K562 (cell line): ENCODE measurements at regions of chr3 and their contacts with region 1.

Region 1: DNA sequence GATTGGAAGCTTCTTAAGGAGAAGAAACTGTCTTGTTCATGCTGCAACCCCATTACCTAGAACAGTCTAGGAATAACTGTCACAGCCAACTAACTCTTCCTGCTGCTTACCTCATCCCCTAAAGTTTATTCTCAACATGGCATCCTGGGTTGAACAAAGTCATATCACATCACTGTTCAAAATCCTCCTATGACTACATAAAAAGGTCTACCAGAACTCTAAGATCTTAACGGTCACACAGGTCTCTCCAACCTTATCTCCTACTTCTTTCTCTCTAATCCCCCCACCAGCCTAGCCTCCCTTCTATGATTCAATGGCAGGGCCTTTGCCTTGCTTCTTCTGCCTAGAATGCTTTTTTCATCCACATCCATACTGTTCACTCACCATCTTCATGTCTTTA is 69.3 kb downstream of the CLASP2 start:
- DNase-seq: peak in 2 of 4 experiments; percentile 20 to 32
- ATAC-seq: peak; percentile 59
- H3K4me3 ChIP-seq: no peak overlapping the region
- H3K27ac ChIP-seq: peak overlapping the region; percentile 35; the same call in 1 of the 3 replicates
- H3K4me1 ChIP-seq: peaks cover 0 to 16% of the 10 kb centered on the region in 2 experiments; a peak in 2 of 5 replicates
- H3K27me3 ChIP-seq: no peaks in the 10 kb centered on the region
- CTCF ChIP-seq: no peak
- EP300 ChIP-seq: no peak
- POLR2A ChIP-seq: no peak
- RAD21 ChIP-seq: no peak

Region 2: DNA sequence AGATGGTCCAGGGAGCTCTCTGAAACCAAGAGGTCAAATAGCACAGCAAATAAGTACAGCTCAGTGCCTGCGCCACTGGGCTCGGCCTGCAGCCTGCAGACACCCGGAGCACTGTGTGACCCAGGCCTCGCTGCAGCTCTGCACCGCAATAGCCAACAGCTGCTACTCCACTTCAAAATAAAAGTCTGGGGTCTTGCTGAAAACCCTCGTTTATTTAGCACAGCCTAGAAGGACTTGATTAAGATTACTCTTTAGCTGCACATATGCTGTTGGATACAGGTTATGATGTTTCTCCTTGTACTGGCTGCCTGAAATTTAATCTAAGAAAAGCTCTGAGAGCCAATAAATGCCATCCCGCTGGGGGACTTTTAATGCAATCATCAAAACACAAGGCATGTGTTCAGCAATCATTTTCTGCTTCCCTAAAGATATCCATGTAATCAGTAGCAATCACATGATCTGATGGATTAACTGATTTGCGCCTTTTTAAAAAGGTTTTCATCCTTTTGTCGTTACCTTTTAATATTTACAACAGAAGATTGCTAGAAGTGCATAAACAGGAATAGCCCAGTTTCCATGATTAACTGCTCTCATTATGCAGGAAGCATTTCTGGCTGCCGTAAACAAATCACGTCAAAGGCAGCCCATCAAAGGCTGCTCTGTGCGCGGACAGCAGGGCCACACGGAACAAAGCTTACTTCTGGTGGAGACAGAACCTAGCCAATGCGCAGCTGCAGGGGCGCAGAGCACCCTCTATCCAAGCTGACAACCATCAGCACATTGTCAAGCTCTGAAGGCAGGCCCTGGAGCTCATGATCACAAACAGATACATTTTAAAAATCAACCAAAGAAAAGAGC is 10.4 kb after region 1 on chr3:
- CTCF ChIA-PET with region 1: no interaction called
- POLR2A ChIA-PET with region 1: interaction called, 12 read pairs
- in situ Hi-C with region 1: no loop called
- intact Hi-C with region 1: no loop called
- DNase-seq: peak; percentile 63 to 71 (median 66)
- ATAC-seq: peak; percentile 97
- H3K4me3 ChIP-seq: peak overlapping the region; percentile 15
- H3K27ac ChIP-seq: peak overlapping the region; percentile 45; the same call in 1 of the 3 replicates
- H3K4me1 ChIP-seq: peaks cover 4 to 17% of the 10 kb centered on the region in 2 experiments
- H3K27me3 ChIP-seq: no peaks in the 10 kb centered on the region
- CTCF ChIP-seq: no peak
- EP300 ChIP-seq: no peak; the same call in 1 of the 2 replicates
- POLR2A ChIP-seq: no peak
- RAD21 ChIP-seq: no peak